ENCODE measurements at regions of chr6 and their contacts with region 1.

Region 1: GRCh38 chr6:71349395-71349794 is 60.8 kb downstream of the OGFRL1 start:
- DNase-seq: peak; percentile 53
- H3K4me3 ChIP-seq: no peak overlapping the region
- H3K27ac ChIP-seq: no peak overlapping the region
- H3K4me1 ChIP-seq: no peaks in the 10 kb centered on the region
- H3K27me3 ChIP-seq: no peaks in the 10 kb centered on the region
- CTCF ChIP-seq: peak; percentile 37 to 41
- POLR2A ChIP-seq: no peak

Region 2: DNA sequence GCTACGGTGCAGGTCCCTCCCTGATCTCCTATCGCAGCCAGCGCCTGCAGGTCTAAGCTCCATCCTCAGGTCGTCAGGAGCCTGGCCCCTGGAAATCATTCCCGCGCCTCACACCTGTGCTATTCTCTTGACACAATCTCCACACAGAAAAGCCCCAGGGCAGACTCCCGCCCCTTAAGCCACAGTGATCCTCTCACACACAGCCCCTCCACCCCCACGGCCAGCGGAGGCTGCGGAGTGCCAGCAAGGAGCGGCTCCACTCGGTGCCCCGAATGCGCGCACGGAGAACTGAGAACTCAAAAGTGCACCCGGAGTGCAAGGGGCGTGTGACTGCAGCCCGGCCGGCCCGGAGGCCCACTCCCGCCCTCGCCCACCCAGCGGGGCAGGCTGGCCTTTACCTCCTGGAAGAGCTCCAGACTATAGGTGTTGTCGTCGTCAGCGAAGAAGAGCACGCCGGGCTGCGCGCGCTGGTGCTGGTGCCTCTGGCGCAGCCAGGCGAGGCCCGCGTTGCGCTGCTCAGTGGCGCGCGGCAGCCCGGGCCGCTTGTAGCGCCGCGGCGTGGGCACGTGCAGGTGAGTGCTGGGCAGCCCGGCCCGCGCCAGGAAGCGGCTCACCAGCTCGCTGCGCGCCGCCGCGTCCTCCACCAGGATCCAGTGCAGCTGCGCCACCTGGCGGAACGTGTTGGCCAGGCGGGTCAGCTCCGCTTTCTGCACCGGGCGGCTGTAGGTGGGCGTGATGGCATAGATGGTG is 393.8 kb before region 1 on chr6:
- CTCF ChIA-PET with region 1: no interaction called
- POLR2A ChIA-PET with region 1: no interaction called
- dilution Hi-C with region 1: no loop called
- intact Hi-C with region 1: loop called (anchors 10 kb)
- DNase-seq: peak; percentile 65
- H3K4me3 ChIP-seq: peak overlapping the region in 2 of 3 experiments; percentile 13 to 31
- H3K27ac ChIP-seq: no peak overlapping the region
- H3K4me1 ChIP-seq: peaks cover 14% of the 10 kb centered on the region
- H3K27me3 ChIP-seq: peaks cover 36 to 72% of the 10 kb centered on the region in 2 experiments
- CTCF ChIP-seq: peak; percentile 84 to 94
- POLR2A ChIP-seq: no peak

Region 3: GRCh38 chr6:71190809-71191208 is 158.6 kb before region 1 on chr6:
- CTCF ChIA-PET with region 1: interaction called, 98 read pairs
- POLR2A ChIA-PET with region 1: no interaction called
- dilution Hi-C with region 1: no loop called
- intact Hi-C with region 1: loop called (anchors 1 kb)
- DNase-seq: peak; percentile 41
- H3K4me3 ChIP-seq: no peak overlapping the region
- H3K27ac ChIP-seq: no peak overlapping the region
- H3K4me1 ChIP-seq: no peaks in the 10 kb centered on the region
- H3K27me3 ChIP-seq: no peaks in the 10 kb centered on the region
- CTCF ChIP-seq: peak; percentile 10 to 14
- POLR2A ChIP-seq: no peak

Region 4: GRCh38 chr6:71364889-71365552 is 15.6 kb after region 1 on chr6:
- CTCF ChIA-PET with region 1: interaction called, 10 read pairs
- POLR2A ChIA-PET with region 1: no interaction called
- dilution Hi-C with region 1: no loop called
- intact Hi-C with region 1: no loop called
- DNase-seq: no peak
- H3K4me3 ChIP-seq: no peak overlapping the region
- H3K27ac ChIP-seq: no peak overlapping the region
- H3K4me1 ChIP-seq: peaks cover 23% of the 10 kb centered on the region
- H3K27me3 ChIP-seq: no peaks in the 10 kb centered on the region
- CTCF ChIP-seq: no peak
- POLR2A ChIP-seq: no peak

Region 5: DNA sequence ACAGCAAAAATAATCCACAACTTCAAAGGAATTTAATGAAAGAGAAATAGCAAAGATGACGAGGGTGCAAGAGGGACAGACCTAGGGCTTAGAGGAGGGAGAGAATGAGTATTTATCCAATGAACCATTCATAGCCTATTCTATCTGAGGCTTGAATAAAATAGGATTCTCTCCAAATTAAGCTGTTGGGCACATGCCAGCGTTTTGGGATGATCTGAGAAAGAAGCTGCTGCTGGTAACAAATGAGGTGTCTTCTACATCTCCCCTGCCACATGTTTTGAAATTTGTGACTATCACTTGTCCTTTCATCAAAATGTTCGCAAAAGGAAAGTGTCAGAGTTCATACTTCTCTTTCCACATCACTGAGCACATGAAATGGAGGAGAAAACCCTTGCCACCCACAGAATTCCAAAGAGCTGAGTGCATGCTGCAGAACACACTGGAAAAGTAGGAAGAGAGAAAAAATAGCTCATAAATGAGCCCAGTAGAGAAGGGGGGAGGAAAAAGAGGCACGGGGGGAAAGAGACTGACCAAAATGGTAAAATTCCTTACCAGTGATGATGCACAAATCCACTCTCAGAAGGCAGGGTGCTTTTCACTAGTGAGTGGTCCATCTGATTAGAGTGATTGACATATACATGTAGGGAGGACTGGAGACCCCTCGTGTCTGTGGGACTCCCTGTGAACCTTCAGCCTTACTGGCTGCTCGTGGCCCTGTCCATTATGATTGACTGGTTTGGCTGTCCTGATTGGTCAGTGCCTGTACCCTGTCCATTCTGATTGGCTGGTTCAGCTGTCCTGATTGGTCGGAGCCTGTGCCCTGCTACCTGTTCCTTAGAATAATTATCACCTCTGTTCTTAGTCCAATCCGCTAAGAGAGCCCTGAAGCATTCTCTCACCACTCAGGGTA is 119.7 kb after region 1 on chr6:
- CTCF ChIA-PET with region 1: no interaction called
- POLR2A ChIA-PET with region 1: no interaction called
- dilution Hi-C with region 1: no loop called
- intact Hi-C with region 1: no loop called
- DNase-seq: no peak
- H3K4me3 ChIP-seq: no peak overlapping the region
- H3K27ac ChIP-seq: no peak overlapping the region
- H3K4me1 ChIP-seq: no peaks in the 10 kb centered on the region
- H3K27me3 ChIP-seq: no peaks in the 10 kb centered on the region
- CTCF ChIP-seq: no peak
- POLR2A ChIP-seq: no peak

Measured in endothelial cell of umbilical vein (primary cell).